Activated naive CD4-positive, alpha-beta T cell treated with anti-CD3 and anti-CD28 coated beads for 36 hours (primary cell): ENCODE measurements at regions of chr1 and their contacts with region 1.

Region 1: GRCh38 chr1:200488375-200489165 is 78.7 kb upstream of the ZNF281 start:
- DNase-seq: peak; percentile 63
- H3K4me3 Mint-ChIP-seq: no peak overlapping the region
- H3K27ac Mint-ChIP-seq: no peak overlapping the region
- H3K4me1 Mint-ChIP-seq: peaks cover 8% of the 10 kb centered on the region
- H3K27me3 Mint-ChIP-seq: peaks cover 11% of the 10 kb centered on the region

Region 2: GRCh38 chr1:199684686-199685273 is 803.8 kb before region 1 on chr1:
- CTCF ChIA-PET with region 1: interaction called, 4 read pairs
- intact Hi-C with region 1: loop called (anchors 1 kb)
- DNase-seq: peak; percentile 31
- H3K4me3 Mint-ChIP-seq: no peak overlapping the region
- H3K27ac Mint-ChIP-seq: no peak overlapping the region
- H3K4me1 Mint-ChIP-seq: no peaks in the 10 kb centered on the region
- H3K27me3 Mint-ChIP-seq: peaks cover 13% of the 10 kb centered on the region

Region 3: GRCh38 chr1:200139661-200140250 is 348.8 kb before region 1 on chr1:
- CTCF ChIA-PET with region 1: interaction called, 5 read pairs
- intact Hi-C with region 1: loop called (anchors 1 kb)
- DNase-seq: peak; percentile 46
- H3K4me3 Mint-ChIP-seq: no peak overlapping the region
- H3K27ac Mint-ChIP-seq: no peak overlapping the region
- H3K4me1 Mint-ChIP-seq: no peaks in the 10 kb centered on the region
- H3K27me3 Mint-ChIP-seq: no peaks in the 10 kb centered on the region

Region 4: DNA sequence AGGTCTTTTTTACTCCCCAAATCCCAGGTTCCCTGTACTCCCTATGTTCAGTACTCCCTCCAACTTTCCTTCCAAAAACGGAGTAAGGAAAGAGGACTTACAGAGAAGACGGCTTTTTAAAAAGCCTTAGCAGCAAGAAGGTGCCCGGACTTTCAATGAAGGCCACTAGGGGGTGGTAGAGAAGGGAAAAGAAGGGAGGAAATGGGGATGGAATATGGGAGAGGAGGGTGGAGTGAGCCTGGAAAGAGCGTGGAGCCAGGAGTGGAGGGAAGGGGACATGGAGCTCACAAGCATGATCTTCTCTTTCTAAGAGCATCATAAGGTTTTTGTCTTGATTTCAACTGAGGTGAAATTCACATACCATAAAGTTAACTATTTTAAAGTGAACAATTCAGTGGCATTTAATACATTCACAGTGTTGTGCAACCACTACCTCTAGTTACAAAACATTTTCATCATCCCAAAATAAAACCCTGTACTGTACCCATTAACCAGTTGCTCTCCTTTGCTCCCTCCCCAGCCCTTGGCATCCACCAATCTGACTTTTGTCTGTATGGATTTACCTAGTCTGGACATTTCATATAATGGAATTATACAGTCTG is 208.7 kb before region 1 on chr1:
- CTCF ChIA-PET with region 1: interaction called, 11 read pairs
- intact Hi-C with region 1: loop called (anchors 1 kb)
- DNase-seq: peak; percentile 62
- H3K4me3 Mint-ChIP-seq: no peak overlapping the region
- H3K27ac Mint-ChIP-seq: no peak overlapping the region
- H3K4me1 Mint-ChIP-seq: no peaks in the 10 kb centered on the region
- H3K27me3 Mint-ChIP-seq: no peaks in the 10 kb centered on the region

Region 5: GRCh38 chr1:200351826-200352549 is 136.6 kb before region 1 on chr1:
- CTCF ChIA-PET with region 1: no interaction called
- intact Hi-C with region 1: loop called (anchors 1 kb)
- DNase-seq: peak; percentile 46
- H3K4me3 Mint-ChIP-seq: peak overlapping the region; percentile 29
- H3K27ac Mint-ChIP-seq: peak overlapping the region; percentile 43
- H3K4me1 Mint-ChIP-seq: peaks cover 33% of the 10 kb centered on the region
- H3K27me3 Mint-ChIP-seq: no peaks in the 10 kb centered on the region

Region 6: DNA sequence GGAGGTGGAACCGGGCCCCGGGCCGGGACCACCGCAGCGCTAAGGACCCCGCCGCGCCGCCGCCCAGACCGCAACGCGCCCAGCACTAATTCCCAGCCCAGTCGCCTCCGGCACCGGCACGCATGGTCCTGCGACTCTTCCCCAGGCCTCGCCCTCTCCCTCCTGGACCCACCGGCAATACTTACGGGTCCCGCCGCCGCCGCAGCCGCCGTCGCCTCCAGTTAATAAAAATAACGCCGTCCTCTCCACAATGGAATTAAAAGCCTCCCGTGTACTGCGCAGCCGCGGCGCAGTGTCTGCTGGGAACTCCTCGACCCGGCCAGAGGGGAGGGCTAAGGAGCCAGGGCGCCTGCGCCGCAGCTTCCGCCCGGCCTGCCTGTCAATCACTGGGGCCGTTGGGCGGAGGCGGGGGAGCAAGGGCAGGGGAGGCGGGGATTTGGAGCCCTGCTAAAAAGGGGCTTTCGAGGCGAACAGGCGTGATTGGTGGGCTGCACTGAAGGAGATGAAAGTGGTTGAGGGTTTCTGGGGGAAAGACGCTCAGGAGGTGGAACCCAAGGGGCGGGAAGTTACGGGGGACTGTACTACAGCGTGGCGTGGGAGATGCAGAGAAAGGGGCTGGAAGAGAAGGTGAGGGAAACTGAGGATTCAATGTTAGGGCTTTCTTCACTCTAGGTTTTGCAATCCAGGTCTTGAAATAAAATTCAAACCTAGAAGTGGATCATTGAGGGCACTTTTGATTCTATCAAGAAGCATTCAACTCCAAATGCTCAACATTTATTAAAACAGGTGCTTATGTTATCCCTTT is 78.6 kb before region 1 on chr1 and contains the start of gene ZNF281:
- CTCF ChIA-PET with region 1: interaction called, 3 read pairs
- intact Hi-C with region 1: loop called (anchors 1 kb)
- DNase-seq: peak; percentile 96
- H3K4me3 Mint-ChIP-seq: peak within 1 kb of the TSS; percentile 96
- H3K27ac Mint-ChIP-seq: peak within 1 kb of the TSS; percentile 93
- H3K4me1 Mint-ChIP-seq: peaks cover 48% of the 10 kb centered on the region
- H3K27me3 Mint-ChIP-seq: no peaks in the 10 kb centered on the region
- total RNA-seq, gene ZNF281: 6.4 to 7.5 TPM

Region 7: GRCh38 chr1:200473698-200474371 is 14.7 kb before region 1 on chr1:
- CTCF ChIA-PET with region 1: interaction called, 3 read pairs
- intact Hi-C with region 1: loop called (anchors 1 kb)
- DNase-seq: peak; percentile 36
- H3K4me3 Mint-ChIP-seq: no peak overlapping the region
- H3K27ac Mint-ChIP-seq: peak overlapping the region; percentile 60
- H3K4me1 Mint-ChIP-seq: peaks cover 35% of the 10 kb centered on the region
- H3K27me3 Mint-ChIP-seq: peaks cover 23% of the 10 kb centered on the region